CD8-positive, alpha-beta T cell (primary cell): ENCODE measurements at regions of chr2 and their contacts with region 1.

Region 1: DNA sequence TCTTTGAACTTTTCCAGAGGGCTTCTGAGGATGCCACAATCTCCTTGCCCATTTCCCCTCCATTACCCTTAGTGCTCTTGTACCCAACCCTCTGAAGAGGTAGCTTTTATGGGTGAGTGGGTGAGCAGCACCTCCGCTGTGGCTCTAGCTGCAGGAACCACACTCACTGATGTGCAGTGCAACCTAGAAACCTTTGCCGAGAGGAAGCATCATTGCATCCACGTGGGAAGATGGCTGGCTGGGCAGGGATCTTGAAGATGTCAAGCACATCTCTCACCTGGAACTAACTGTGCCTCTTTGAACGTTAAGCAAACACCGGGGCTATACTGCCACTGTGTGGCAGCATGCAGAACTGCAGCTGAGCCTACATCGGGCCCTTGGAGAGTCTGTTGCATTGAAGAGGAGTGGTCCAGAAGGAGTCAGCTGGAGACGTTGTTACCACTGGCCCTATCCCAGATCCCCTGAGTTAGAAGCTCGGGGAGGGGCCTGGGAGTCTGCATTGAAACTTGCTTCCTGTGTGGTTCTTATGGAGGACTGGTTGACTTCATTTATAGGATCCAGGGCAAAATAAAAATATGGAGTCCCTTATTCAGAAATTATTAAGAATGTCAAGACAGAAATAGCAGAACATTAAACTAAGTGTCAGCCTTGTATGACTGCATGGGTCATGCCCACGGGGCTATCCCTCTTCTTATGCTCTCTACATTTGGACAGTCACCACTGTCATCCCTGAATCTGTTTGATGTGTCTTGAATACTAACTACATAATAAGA is 28.7 kb downstream of the IGFBP5 start:
- DNase-seq: peak; percentile 46 to 79 (median 66)
- ATAC-seq: peak; percentile 97
- H3K4me3 ChIP-seq: no peak overlapping the region
- H3K4me3 Mint-ChIP-seq: no peak overlapping the region
- H3K27ac ChIP-seq: no peak overlapping the region
- H3K27ac Mint-ChIP-seq: no peak overlapping the region
- H3K4me1 ChIP-seq: no peaks in the 10 kb centered on the region
- H3K4me1 Mint-ChIP-seq: no peaks in the 10 kb centered on the region
- H3K27me3 ChIP-seq: peaks cover 0 to 2% of the 10 kb centered on the region in 2 experiments
- H3K27me3 Mint-ChIP-seq: peaks cover 18% of the 10 kb centered on the region
- CTCF ChIP-seq: peak; percentile 98

Region 2: DNA sequence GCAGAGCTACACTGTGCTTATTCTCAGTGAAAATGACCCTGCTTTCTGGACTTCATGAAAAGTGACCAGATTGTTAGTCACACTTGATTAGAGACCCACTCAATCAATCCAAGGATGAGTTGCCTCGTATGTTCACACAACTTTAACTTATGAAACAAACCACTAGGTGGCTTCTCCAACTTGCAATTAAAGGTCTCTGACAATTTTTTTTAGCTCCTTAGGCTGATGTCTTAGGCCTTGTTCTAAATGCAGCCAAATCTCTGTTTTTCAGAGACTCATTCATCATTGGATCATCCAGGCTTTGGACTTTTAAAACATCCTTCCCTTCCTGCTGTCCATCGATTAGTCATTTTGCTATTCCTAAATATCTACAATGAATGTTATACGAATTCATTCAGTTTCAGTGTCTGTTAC is 716.6 kb before region 1 on chr2:
- CTCF ChIA-PET with region 1: no interaction called
- POLR2A ChIA-PET with region 1: no interaction called
- intact Hi-C with region 1: loop called in 1 of 2 experiments (anchors 5 kb)
- DNase-seq: peak in 2 of 9 experiments; percentile 41 to 58
- ATAC-seq: peak; percentile 52
- H3K4me3 ChIP-seq: no peak overlapping the region
- H3K4me3 Mint-ChIP-seq: no peak overlapping the region
- H3K27ac ChIP-seq: no peak overlapping the region
- H3K27ac Mint-ChIP-seq: no peak overlapping the region
- H3K4me1 ChIP-seq: no peaks in the 10 kb centered on the region
- H3K4me1 Mint-ChIP-seq: no peaks in the 10 kb centered on the region
- H3K27me3 ChIP-seq: no peaks in the 10 kb centered on the region
- H3K27me3 Mint-ChIP-seq: no peaks in the 10 kb centered on the region
- CTCF ChIP-seq: peak; percentile 48

Region 3: DNA sequence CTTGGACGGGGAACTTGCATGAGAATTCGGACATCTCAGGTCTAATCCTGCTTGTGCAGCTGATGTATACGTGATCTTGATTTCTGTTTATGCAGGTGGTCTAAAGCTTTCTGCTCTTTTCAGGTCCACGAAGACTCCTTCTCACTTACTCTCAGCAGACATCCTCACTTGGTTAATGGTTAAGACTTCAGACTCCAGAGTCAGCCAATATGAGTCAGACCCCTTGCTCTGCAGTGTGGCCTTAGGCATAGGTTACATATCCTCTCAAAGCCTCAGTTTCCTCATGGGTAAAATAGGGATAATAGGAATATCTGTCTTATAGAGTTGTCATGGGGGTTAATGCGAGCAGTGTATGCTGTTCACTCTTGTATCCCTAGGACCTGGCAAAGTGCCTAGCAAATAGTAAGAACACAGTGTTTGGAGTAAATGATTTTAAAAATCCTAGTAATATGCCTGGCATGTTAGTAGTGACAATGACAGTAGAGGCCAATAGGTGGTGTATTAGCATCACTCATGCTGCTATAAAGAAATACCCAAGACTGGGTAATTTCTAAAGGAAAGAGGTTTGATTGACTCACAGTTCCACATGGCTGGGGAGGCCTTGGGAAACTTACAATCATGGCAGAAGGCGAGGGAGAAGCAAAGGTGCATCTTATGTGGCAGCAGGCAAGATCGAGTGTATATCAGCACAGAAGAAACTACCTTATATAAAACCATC is 515.2 kb before region 1 on chr2:
- CTCF ChIA-PET with region 1: no interaction called
- POLR2A ChIA-PET with region 1: no interaction called
- intact Hi-C with region 1: loop called in 1 of 2 experiments (anchors 10 kb)
- DNase-seq: peak in 1 of 9 experiments; percentile 11
- ATAC-seq: peak; percentile 29
- H3K4me3 ChIP-seq: no peak overlapping the region
- H3K4me3 Mint-ChIP-seq: no peak overlapping the region
- H3K27ac ChIP-seq: no peak overlapping the region
- H3K27ac Mint-ChIP-seq: peak overlapping the region; percentile 50
- H3K4me1 ChIP-seq: no peaks in the 10 kb centered on the region
- H3K4me1 Mint-ChIP-seq: peaks cover 38% of the 10 kb centered on the region
- H3K27me3 ChIP-seq: no peaks in the 10 kb centered on the region
- H3K27me3 Mint-ChIP-seq: no peaks in the 10 kb centered on the region
- CTCF ChIP-seq: no peak

Region 4: GRCh38 chr2:216222650-216223352 is 443.8 kb before region 1 on chr2:
- CTCF ChIA-PET with region 1: interaction called, 5 read pairs
- POLR2A ChIA-PET with region 1: no interaction called
- intact Hi-C with region 1: loop called in 1 of 2 experiments (anchors 2 kb)
- DNase-seq: peak in 2 of 9 experiments; percentile 18 to 34
- ATAC-seq: no peak
- H3K4me3 ChIP-seq: no peak overlapping the region
- H3K4me3 Mint-ChIP-seq: no peak overlapping the region
- H3K27ac ChIP-seq: no peak overlapping the region
- H3K27ac Mint-ChIP-seq: no peak overlapping the region
- H3K4me1 ChIP-seq: no peaks in the 10 kb centered on the region
- H3K4me1 Mint-ChIP-seq: peaks cover 9% of the 10 kb centered on the region
- H3K27me3 ChIP-seq: no peaks in the 10 kb centered on the region
- H3K27me3 Mint-ChIP-seq: no peaks in the 10 kb centered on the region
- CTCF ChIP-seq: no peak

Region 5: DNA sequence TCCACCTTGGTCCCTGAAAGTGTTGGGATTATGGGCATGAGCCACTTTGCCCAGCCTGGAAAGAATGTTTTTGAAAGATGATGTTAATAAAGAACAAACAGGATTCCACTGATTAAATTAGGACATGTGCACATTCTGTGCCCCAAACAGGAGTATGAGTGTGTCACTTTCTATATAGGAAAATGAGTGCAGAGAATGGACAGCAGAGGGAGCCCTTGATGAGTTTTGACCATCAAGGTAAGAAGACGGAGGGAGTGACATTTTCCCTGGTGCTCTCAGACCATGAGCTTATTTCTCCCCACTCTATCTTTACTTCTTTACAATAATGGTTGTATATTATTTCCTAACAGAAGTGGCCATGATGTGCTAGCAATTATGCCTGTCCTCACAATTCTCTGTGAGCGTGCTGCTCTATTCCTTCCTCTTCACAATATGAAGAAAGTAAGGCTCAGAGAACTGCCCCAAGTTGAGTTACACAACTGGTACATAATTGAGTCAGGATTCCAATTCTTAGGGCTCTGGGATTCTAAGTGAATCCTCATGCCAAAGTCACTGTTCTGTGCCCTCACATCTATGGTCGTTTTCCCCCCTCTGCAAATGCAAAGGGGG is 147.4 kb before region 1 on chr2:
- CTCF ChIA-PET with region 1: interaction called, 207 read pairs
- POLR2A ChIA-PET with region 1: interaction called, 3 read pairs
- intact Hi-C with region 1: loop called in 1 of 2 experiments (anchors 1 kb)
- DNase-seq: peak in 8 of 9 experiments; percentile 20 to 77 (median 48)
- ATAC-seq: peak; percentile 51
- H3K4me3 ChIP-seq: no peak overlapping the region
- H3K4me3 Mint-ChIP-seq: no peak overlapping the region
- H3K27ac ChIP-seq: no peak overlapping the region
- H3K27ac Mint-ChIP-seq: no peak overlapping the region
- H3K4me1 ChIP-seq: no peaks in the 10 kb centered on the region
- H3K4me1 Mint-ChIP-seq: no peaks in the 10 kb centered on the region
- H3K27me3 ChIP-seq: no peaks in the 10 kb centered on the region
- H3K27me3 Mint-ChIP-seq: no peaks in the 10 kb centered on the region
- CTCF ChIP-seq: peak; percentile 72

Region 6: DNA sequence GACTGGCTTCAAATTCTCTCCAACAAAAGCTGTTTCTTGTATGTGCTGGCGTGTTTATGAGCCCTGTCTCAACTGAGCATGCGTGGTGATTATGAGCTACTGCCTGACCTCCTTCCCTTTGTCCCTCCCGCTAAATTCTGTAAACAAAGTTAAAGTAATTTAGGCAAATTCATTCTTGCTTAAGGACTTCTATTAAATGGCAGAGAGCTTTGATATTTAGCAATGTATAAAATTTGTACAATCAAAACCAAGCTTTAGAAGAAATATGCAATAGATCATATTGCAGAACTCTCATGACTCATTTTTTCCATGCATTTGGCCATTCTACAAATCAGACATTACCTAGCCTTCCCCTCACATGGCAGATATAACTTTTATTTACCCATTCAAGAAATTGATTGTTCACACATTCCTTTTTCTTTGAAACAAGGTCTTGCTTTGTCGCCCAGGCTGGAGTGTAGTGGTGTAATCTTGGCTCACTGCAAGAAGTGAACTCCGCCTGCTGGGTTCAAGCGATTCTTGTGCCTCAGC is 15.2 kb before region 1 on chr2:
- CTCF ChIA-PET with region 1: interaction called, 29 read pairs
- POLR2A ChIA-PET with region 1: no interaction called
- intact Hi-C with region 1: no loop called
- DNase-seq: no peak
- ATAC-seq: no peak
- H3K4me3 ChIP-seq: no peak overlapping the region
- H3K4me3 Mint-ChIP-seq: no peak overlapping the region
- H3K27ac ChIP-seq: no peak overlapping the region
- H3K27ac Mint-ChIP-seq: no peak overlapping the region
- H3K4me1 ChIP-seq: no peaks in the 10 kb centered on the region
- H3K4me1 Mint-ChIP-seq: no peaks in the 10 kb centered on the region
- H3K27me3 ChIP-seq: no peaks in the 10 kb centered on the region
- H3K27me3 Mint-ChIP-seq: no peaks in the 10 kb centered on the region
- CTCF ChIP-seq: no peak